PC-3 (cell line): ENCODE measurements at regions of chr13 and their contacts with region 1.

Region 1: DNA sequence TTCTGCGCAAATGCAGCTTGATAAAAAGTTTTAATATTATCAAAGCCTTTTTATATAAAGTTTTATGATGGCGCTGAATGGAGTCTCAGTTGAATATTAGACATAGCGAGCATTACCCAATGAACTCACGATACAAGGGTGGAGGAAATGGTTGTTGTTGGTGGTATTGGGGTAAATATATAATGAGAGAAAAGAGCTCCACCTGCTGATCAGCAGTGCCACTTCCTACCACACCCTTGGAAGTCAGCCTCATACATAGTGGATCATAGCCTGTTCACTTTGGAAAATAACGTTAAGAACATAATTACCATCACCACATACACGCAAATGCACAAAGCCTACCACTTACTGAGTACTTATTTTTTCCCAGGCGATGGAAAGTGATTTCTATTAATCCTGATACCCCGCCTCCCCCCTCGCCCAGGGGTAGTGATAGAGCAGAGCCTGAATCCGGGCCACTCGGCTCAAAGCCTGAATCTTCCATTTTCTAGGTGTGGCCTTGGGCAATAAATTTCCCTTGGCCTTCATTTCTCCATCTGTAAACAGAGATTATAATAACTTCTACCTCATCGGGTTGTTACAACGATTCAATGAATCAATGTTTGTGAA is 358.3 kb downstream of the KLF5 start:
- DNase-seq: peak; percentile 64
- ATAC-seq: peak; percentile 18; the same call in 1 of the 2 replicates
- H3K4me3 ChIP-seq: no peak overlapping the region
- H3K27ac ChIP-seq: peak overlapping the region; percentile 100
- H3K4me1 ChIP-seq: peaks cover 28% of the 10 kb centered on the region
- H3K27me3 ChIP-seq: no peaks in the 10 kb centered on the region
- CTCF ChIP-seq: peak; percentile 69

Region 2: DNA sequence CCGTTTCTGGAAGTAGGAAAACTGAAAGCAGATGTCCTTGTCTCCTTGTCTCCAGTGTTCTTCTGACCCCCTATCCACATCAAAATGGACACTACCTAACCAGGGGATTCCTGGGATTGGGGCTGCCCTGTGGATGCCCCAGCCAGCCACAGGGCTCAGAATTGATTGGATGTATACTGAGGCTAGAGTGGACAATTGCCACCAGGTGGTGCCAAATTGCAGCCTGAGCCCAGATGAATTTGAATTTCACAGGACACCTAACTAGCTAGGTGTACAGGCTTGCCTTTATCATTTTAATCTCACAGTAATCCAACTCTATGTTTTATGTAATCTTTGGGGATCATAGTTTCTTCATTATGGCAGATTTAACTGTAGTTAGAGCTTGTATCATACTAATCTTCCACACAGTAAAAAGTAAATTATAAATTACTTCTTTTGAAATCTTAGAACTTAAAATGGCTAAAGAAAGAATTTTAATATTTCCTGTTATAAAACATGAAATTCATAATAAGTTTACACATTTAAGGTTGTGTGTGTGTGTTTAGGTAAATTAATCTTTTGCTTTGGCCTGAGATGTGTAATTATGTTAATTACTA is 577.2 kb before region 1 on chr13:
- CTCF ChIA-PET with region 1: no interaction called
- POLR2A ChIA-PET with region 1: no interaction called
- intact Hi-C with region 1: loop called (anchors 10 kb)
- DNase-seq: peak; percentile 74
- ATAC-seq: peak; percentile 92
- H3K4me3 ChIP-seq: no peak overlapping the region
- H3K27ac ChIP-seq: no peak overlapping the region
- H3K4me1 ChIP-seq: no peaks in the 10 kb centered on the region
- H3K27me3 ChIP-seq: no peaks in the 10 kb centered on the region
- CTCF ChIP-seq: peak; percentile 84

Region 3: GRCh38 chr13:73075546-73075945 is 341.6 kb before region 1 on chr13:
- CTCF ChIA-PET with region 1: no interaction called
- POLR2A ChIA-PET with region 1: no interaction called
- intact Hi-C with region 1: loop called (anchors 5 kb)
- DNase-seq: no peak
- ATAC-seq: no peak
- H3K4me3 ChIP-seq: no peak overlapping the region
- H3K27ac ChIP-seq: peak overlapping the region; percentile 21; the same call in 1 of the 2 replicates
- H3K4me1 ChIP-seq: peaks cover 29% of the 10 kb centered on the region
- H3K27me3 ChIP-seq: no peaks in the 10 kb centered on the region
- CTCF ChIP-seq: no peak

Region 4: GRCh38 chr13:73223372-73223781 is 193.7 kb before region 1 on chr13:
- CTCF ChIA-PET with region 1: no interaction called
- POLR2A ChIA-PET with region 1: no interaction called
- intact Hi-C with region 1: loop called (anchors 10 kb)
- DNase-seq: peak; percentile 56
- ATAC-seq: peak; percentile 75
- H3K4me3 ChIP-seq: no peak overlapping the region
- H3K27ac ChIP-seq: peak overlapping the region; percentile 32
- H3K4me1 ChIP-seq: peaks cover 9% of the 10 kb centered on the region; the same call in 1 of the 2 replicates
- H3K27me3 ChIP-seq: no peaks in the 10 kb centered on the region
- CTCF ChIP-seq: no peak

Region 5: DNA sequence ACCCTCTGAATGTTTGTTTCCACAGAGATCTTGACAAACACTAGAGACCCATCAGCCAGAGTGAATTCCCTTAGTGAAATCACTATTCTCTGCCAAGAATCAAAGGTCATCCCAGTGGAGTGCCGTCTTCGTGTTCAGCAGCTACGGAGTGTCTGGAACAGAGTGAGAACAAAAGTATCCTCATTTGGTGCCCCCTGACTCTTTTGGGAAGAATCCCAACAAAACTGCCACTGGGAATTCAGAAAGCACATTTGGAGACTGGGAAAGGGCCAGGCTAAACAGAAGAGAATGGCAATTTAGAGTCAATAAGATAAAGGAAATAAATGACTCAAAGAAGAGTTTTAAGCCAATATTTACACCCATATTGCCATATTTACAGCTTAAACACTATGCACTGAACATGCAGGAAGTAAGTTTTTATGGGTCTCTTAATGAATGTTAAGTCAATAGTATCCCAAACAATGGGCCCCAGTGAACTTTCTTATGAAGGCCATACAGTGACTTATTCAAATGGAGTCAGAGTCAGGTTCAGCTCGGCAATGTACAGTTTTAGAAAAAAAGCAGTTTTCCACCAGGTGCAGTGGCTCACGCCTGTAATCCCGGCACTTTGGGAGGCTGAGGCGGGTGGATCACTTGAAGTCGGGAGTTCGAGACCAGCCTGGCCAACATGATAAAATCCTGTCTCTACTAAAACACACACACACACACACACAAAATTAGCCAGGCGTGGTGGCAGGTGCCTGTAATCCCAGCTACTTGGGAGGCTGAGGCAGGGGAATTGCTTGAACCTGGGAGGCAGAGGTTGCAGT is 34.3 kb after region 1 on chr13:
- CTCF ChIA-PET with region 1: interaction called, 3 read pairs
- POLR2A ChIA-PET with region 1: interaction called, 6 read pairs
- intact Hi-C with region 1: loop called (anchors 1 kb)
- DNase-seq: peak; percentile 86
- ATAC-seq: peak; percentile 94
- H3K4me3 ChIP-seq: peak overlapping the region; percentile 7; the same call in 1 of the 2 replicates
- H3K27ac ChIP-seq: peak overlapping the region; percentile 98
- H3K4me1 ChIP-seq: peaks cover 40% of the 10 kb centered on the region
- H3K27me3 ChIP-seq: no peaks in the 10 kb centered on the region
- CTCF ChIP-seq: no peak

Region 6: DNA sequence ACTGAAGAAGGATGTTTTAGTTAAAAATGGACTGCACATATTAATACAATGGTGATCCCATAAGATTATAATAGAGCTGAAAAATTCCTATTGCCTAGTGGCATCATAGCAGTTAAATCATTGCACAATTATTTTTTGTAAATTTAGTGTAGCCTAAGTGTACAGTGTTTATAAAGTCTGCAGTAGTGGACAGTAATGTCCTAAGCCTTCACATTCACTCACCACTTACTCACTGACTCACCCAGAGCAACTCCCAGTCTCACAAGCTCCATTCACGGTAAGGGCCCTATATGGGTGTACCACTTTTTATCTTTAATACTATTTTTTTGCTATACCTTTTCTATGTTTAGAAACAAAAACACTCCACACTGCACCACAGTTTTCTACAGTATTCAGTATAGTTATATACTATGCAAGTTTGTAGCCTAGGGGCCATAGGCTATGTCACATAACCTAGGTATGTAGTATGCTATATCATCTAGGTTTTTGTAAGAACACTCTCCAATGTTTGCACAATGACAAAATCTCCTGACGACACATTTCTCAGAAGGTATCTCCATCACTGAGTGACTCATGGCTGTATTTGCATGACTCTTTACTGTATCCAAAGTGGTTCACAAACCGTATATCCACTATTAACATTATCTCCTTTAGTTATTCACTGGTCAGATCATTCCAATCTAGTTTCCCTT is 181.0 kb after region 1 on chr13:
- CTCF ChIA-PET with region 1: no interaction called
- POLR2A ChIA-PET with region 1: no interaction called
- intact Hi-C with region 1: loop called (anchors 5 kb)
- DNase-seq: peak; percentile 93
- ATAC-seq: peak; percentile 88
- H3K4me3 ChIP-seq: no peak overlapping the region
- H3K27ac ChIP-seq: peak overlapping the region; percentile 99
- H3K4me1 ChIP-seq: peaks cover 49% of the 10 kb centered on the region
- H3K27me3 ChIP-seq: no peaks in the 10 kb centered on the region
- CTCF ChIP-seq: no peak

Region 7: GRCh38 chr13:73708393-73708985 is 291.4 kb after region 1 on chr13:
- CTCF ChIA-PET with region 1: no interaction called
- POLR2A ChIA-PET with region 1: no interaction called
- intact Hi-C with region 1: loop called (anchors 2 kb)
- DNase-seq: peak; percentile 77
- ATAC-seq: peak; percentile 81
- H3K4me3 ChIP-seq: no peak overlapping the region
- H3K27ac ChIP-seq: peak overlapping the region; percentile 54; the same call in 1 of the 2 replicates
- H3K4me1 ChIP-seq: no peaks in the 10 kb centered on the region
- H3K27me3 ChIP-seq: no peaks in the 10 kb centered on the region
- CTCF ChIP-seq: peak; percentile 89